ENCODE measurements at regions of chr22 and their contacts with region 1.

Region 1: DNA sequence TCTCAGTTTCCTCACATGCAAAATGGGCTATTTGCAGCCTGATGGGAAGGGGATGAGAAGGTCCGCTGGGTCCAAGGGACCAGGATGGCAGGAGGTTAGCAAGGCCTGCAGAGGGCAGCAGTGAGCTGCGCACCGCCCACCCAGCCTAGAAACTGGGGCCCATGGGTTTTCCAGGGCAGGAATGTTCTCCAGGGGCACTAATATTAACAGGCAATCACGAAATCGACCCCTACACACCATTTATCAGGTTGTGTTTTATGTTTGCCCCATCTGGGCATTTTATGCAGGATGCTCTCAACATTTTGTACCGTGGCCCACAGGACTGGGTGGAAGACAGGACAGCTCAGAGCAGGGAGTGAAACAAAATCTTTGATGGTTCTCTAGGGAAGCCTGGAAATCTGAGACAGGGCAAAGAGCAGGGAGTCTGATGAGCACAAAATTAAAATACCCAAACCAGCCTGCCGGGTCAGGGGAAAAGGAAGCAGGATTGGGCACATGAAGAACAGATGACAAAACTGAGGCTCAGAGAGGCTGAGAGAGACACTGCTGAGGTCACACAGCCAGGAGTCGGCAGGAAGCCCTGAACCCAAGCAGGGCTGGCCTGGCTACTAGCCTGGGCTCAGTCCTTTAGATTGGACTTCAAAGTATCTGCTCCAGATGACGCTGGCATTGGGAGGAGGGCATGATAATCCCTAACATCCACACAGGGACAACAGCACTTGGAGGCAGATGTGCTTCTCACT is 1.6 kb upstream of the BCR start:
- DNase-seq: peak; percentile 79
- H3K4me3 ChIP-seq: no peak overlapping the region
- H3K27ac ChIP-seq: no peak overlapping the region
- H3K4me1 ChIP-seq: peaks cover 39% of the 10 kb centered on the region
- H3K27me3 ChIP-seq: no peaks in the 10 kb centered on the region
- CTCF ChIP-seq: peak; percentile 96

Region 2: GRCh38 chr22:23163665-23164064 is 15.0 kb before region 1 on chr22:
- CTCF ChIA-PET with region 1: no interaction called
- POLR2A ChIA-PET with region 1: no interaction called
- intact Hi-C with region 1: no loop called
- DNase-seq: no peak
- H3K4me3 ChIP-seq: no peak overlapping the region
- H3K27ac ChIP-seq: no peak overlapping the region
- H3K4me1 ChIP-seq: no peaks in the 10 kb centered on the region
- H3K27me3 ChIP-seq: no peaks in the 10 kb centered on the region
- CTCF ChIP-seq: no peak

Region 3: GRCh38 chr22:23240639-23241389 is 62.1 kb after region 1 on chr22:
- CTCF ChIA-PET with region 1: interaction called, 3 read pairs
- POLR2A ChIA-PET with region 1: no interaction called
- intact Hi-C with region 1: loop called (anchors 1 kb)
- DNase-seq: peak; percentile 33
- H3K4me3 ChIP-seq: no peak overlapping the region
- H3K27ac ChIP-seq: peak overlapping the region; percentile 85
- H3K4me1 ChIP-seq: peaks cover 43% of the 10 kb centered on the region
- H3K27me3 ChIP-seq: no peaks in the 10 kb centered on the region
- CTCF ChIP-seq: peak; percentile 54

Region 4: DNA sequence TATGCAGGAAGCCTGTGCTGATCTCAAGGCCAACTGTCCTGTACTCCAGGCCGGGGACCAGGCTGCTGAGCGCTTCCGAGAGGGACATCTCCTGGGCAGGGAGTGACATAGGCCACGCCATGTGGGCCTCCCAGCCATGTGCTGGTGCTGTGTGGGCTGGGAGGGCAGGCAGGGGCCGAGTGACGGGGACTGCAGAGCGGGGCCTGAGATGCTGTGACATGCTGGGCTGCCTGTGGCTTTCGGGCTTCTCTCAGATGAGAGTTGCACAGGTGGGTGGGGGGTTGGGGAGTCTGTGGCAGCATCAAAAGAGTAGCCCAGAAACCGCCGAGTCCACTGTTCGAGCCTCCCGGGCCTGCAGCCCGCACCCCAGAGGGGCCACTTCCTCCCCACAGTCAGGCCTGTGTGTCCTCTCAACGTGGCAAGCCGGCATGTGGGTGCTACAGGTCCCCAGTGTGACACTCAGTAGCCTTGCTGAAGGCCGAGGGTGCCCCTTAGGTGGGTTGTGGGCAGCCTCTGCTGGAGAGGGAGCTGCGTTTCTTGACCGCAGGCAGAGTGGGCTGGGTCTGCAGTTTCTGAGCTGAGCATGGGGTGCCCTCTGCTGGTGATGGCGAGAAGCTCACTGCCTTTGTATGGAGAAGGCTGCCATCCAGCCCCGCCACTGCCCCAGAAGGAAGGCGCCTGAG is 102.9 kb after region 1 on chr22:
- CTCF ChIA-PET with region 1: interaction called, 43 read pairs
- POLR2A ChIA-PET with region 1: no interaction called
- intact Hi-C with region 1: loop called (anchors 1 kb)
- DNase-seq: peak; percentile 85
- H3K4me3 ChIP-seq: no peak overlapping the region
- H3K27ac ChIP-seq: peak overlapping the region; percentile 63
- H3K4me1 ChIP-seq: no peaks in the 10 kb centered on the region
- H3K27me3 ChIP-seq: no peaks in the 10 kb centered on the region
- CTCF ChIP-seq: peak; percentile 90

Region 5: DNA sequence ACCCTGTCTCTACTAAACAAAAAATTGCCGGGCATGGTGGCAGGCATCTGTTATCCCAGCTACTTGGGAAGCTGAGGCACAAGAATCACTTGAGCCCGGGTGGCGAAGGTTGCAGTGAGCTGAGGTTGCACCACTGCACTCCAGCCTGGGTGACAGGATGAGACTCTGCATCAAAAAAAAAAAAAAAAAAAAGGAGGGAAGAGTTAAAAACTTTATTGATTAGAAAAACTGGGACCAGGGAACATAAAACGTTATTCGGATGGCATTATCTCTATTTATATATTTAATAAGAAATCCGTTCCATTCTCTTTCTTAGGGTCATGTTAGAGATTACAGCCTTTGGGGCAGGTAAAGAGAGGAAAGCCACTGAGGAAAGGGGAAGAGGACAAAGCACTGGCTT is 199.1 kb after region 1 on chr22:
- CTCF ChIA-PET with region 1: interaction called, 11 read pairs
- POLR2A ChIA-PET with region 1: no interaction called
- intact Hi-C with region 1: no loop called
- DNase-seq: no peak
- H3K4me3 ChIP-seq: no peak overlapping the region
- H3K27ac ChIP-seq: no peak overlapping the region
- H3K4me1 ChIP-seq: no peaks in the 10 kb centered on the region
- H3K27me3 ChIP-seq: no peaks in the 10 kb centered on the region
- CTCF ChIP-seq: no peak

Region 6: DNA sequence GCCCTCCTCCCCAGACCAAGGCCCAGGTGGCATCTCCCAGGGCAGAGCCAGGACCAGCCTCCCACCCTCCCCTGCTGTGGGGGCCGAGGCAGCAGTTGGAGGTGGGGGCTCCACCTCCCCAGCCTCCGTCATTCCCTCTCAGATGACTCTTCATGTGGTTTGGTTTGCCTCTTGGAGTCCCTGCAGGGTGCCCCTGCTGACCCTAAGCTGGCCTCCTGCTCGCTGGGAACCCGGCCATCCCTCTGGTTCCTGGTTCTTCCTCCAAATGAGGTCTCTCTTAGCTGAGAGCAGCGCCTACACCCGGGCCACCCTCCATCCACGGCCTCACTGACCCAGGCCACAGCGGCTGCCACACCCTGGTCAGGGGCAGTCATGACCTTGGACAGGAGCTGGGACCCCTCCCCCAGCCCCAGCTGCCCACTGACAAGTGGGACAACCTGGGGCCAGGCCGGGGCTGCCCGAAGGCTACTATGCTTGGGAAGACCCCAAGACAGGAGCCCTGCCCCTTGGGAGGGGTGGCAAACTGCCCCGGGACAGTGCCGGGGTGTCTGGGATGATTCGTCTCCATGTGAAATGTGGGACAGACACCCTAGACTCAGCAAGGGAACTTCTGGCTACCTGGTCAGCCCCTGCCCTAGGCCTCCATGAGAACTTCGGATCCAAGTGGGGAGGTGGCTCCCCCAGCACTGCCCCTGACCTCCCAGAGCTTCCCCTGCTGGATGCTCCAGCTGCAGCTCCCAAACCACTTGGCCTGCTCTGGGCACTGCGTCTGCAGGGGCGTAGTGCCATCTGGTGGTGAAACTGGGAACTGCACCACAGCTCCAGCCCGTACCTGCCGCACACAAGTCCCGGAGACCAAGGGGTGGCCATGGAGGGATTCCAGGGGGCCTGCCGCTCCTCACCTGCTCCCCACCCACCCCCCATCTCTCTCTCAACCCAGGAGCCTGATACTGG is 206.9 kb after region 1 on chr22:
- CTCF ChIA-PET with region 1: interaction called, 11 read pairs
- POLR2A ChIA-PET with region 1: no interaction called
- intact Hi-C with region 1: loop called (anchors 5 kb)
- DNase-seq: peak; percentile 81
- H3K4me3 ChIP-seq: no peak overlapping the region
- H3K27ac ChIP-seq: no peak overlapping the region
- H3K4me1 ChIP-seq: no peaks in the 10 kb centered on the region
- H3K27me3 ChIP-seq: no peaks in the 10 kb centered on the region
- CTCF ChIP-seq: peak; percentile 97

Measured in A673 (cell line).